Panc1 (cell line): ENCODE measurements at regions of chr1 and their contacts with region 1.

Region 1: DNA sequence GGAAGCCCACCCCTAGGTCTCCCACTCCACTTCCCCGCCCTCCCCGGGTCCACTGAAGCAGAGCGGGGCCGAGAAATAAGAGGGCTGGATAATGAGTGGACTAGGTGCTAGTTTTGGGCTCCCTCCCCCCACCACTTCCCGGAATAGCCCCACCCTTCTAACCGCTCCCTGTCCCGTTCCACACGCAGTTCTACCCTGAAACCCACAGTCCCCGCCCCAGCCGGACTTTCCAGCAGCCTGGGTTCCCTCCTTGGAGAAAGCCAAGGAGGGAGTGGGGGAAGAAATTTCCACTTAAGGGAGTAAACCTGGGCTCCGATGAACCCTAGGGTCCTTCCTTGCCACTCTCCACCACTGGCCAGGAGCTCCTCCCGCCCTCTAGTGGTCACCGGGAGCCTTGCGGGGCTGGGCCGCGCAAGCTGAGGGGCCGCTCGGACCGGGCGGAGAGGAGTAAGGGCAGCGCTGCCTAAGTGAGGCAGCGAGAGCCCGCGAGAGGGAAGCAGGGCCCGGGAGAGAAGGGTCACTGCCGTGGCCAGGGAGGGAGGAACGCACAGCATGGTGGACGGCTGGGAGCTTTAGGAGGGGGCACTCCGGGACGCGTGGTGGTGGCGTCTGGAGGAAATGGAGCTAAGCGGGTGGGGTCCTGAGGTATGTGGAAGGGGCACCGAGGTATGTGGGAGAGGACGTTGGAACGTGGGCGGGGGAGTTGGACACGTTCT is 14.3 kb downstream of the THBS3 start:
- DNase-seq: peak; percentile 69
- ATAC-seq: peak; percentile 87
- H3K4me3 ChIP-seq: peak overlapping the region; percentile 64 to 96
- H3K27ac ChIP-seq: peak overlapping the region; percentile 97
- H3K4me1 ChIP-seq: peaks cover 24% of the 10 kb centered on the region
- H3K27me3 ChIP-seq: no peaks in the 10 kb centered on the region
- CTCF ChIP-seq: peak; percentile 99

Region 2: DNA sequence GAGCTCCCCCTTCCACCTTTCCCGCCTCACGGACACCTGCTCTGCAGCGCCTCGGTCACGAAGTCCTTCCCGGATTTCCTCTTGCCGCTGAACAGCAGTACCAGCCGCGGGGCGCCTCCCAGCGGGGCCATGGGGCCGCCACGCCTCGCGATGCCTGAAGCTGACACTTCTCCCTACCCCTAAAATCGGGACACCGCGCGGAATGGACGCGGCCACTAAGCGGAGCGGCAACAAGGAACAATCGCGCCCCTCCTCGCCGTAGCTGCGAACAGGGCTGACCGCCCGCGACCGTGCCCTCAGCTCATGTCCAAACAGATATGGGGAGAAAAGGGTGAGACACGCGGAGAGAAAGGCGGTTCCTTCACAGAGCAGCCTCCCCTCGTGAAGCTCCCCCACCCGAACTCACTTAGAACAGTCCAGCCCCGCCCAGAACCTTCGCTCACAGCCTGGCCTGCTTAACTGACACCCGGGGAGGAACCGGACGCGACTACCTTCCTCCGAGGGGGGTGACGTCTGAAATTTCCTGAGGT is 256.8 kb before region 1 on chr1 and contains the start of gene PMVK:
- CTCF ChIA-PET with region 1: no interaction called
- POLR2A ChIA-PET with region 1: no interaction called
- in situ Hi-C with region 1: no loop called
- intact Hi-C with region 1: no loop called
- DNase-seq: peak; percentile 85
- ATAC-seq: peak; percentile 95
- H3K4me3 ChIP-seq: peak within 1 kb of the TSS; percentile 68 to 94
- H3K27ac ChIP-seq: peak within 1 kb of the TSS; percentile 97
- H3K4me1 ChIP-seq: peaks cover 11% of the 10 kb centered on the region
- H3K27me3 ChIP-seq: no peaks in the 10 kb centered on the region
- CTCF ChIP-seq: no peak; the same call in 1 of the 2 replicates
- total RNA-seq, gene PMVK: 42.2 TPM

Region 3: GRCh38 chr1:155127105-155127964 is 66.1 kb before region 1 on chr1 and contains the start of gene EFNA1:
- CTCF ChIA-PET with region 1: interaction called, 17 read pairs
- POLR2A ChIA-PET with region 1: interaction called, 5 read pairs
- in situ Hi-C with region 1: no loop called
- intact Hi-C with region 1: no loop called
- DNase-seq: no peak
- ATAC-seq: peak; percentile 71
- H3K4me3 ChIP-seq: peak within 1 kb of the TSS; percentile 64 to 65
- H3K27ac ChIP-seq: peak within 1 kb of the TSS; percentile 92
- H3K4me1 ChIP-seq: peaks cover 59% of the 10 kb centered on the region
- H3K27me3 ChIP-seq: no peaks in the 10 kb centered on the region
- CTCF ChIP-seq: no peak
- total RNA-seq, gene EFNA1: 23.8 TPM

Region 4: DNA sequence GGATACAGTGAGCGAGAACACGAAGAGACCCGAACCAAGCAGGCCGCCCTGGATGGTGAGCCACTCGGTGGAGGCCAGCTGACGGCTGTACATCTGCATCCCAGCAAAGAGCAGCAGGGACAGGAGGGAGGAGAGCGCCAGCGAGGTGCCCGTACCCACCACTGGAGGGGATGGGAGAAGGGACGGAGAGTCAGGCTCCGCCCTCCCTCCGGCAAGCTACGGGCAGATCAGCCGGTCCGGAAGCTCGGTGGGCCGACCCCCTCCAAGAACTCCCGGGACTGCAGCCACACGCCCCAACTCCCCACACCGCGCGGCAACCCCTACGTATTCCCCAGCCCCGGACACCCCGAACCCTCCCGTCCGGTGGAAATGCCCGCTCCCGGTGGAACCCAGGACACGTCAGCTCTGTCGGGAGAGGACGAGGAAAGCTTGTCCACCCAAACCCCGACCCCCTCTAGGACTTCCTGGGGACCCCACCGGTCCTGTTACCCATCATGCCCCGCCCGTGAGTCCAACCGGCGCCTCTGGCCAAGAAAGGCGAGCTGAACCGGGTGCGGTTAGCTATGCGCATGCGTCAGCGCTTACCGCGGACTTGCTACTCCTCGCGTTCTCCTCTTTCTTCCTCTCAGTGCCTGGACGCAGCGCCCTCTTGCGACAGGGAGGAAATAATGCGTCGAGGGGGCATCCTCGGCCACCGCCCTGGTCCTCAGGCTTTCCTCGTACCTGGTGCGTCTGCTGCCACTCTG is 20.5 kb before region 1 on chr1 and contains the start of gene KRTCAP2:
- CTCF ChIA-PET with region 1: interaction called, 14 read pairs
- POLR2A ChIA-PET with region 1: interaction called, 18 read pairs
- in situ Hi-C with region 1: no loop called
- intact Hi-C with region 1: no loop called
- DNase-seq: peak; percentile 89
- ATAC-seq: peak; percentile 81
- H3K4me3 ChIP-seq: peak within 1 kb of the TSS; percentile 88 to 89
- H3K27ac ChIP-seq: peak within 1 kb of the TSS; percentile 92
- H3K4me1 ChIP-seq: peaks cover 24% of the 10 kb centered on the region
- H3K27me3 ChIP-seq: no peaks in the 10 kb centered on the region
- CTCF ChIP-seq: peak; percentile 97
- total RNA-seq, gene KRTCAP2: 155 TPM

Region 5: GRCh38 chr1:155208541-155209311 is 15.3 kb after region 1 on chr1 and contains the start of gene MTX1:
- CTCF ChIA-PET with region 1: interaction called, 4 read pairs
- POLR2A ChIA-PET with region 1: interaction called, 11 read pairs
- in situ Hi-C with region 1: no loop called
- intact Hi-C with region 1: no loop called
- DNase-seq: peak; percentile 51
- ATAC-seq: peak; percentile 87
- H3K4me3 ChIP-seq: peak within 1 kb of the TSS; percentile 94 to 99
- H3K27ac ChIP-seq: peak within 1 kb of the TSS; percentile 93
- H3K4me1 ChIP-seq: peaks cover 19% of the 10 kb centered on the region
- H3K27me3 ChIP-seq: no peaks in the 10 kb centered on the region
- CTCF ChIP-seq: no peak
- total RNA-seq, gene MTX1: 53.6 TPM

Region 6: DNA sequence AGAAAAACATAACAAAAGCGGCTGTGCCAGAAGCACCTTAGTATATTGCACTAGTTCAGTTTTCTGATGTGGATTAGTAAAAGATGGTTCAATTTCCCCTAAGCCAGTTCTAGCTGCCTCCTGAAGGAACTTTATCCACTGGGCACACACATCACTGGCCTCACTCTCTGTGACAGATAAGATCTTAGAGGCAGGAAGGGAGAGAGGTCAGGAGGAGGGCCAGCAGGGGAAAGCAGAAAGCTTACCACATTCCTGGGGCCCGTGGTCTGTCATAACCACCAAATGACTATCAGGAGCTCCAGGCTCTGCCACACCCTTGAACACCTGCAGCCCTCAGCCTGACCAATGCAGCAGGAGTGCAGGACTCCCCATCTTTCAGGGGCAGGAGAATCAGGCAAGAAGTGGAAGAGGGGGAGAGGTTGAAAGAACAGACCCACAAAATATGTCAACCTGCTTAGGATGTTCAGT is 1764.8 kb after region 1 on chr1:
- CTCF ChIA-PET with region 1: no interaction called
- POLR2A ChIA-PET with region 1: no interaction called
- in situ Hi-C with region 1: no loop called
- intact Hi-C with region 1: no loop called
- DNase-seq: no peak
- ATAC-seq: no peak
- H3K4me3 ChIP-seq: no peak overlapping the region
- H3K27ac ChIP-seq: no peak overlapping the region
- H3K4me1 ChIP-seq: no peaks in the 10 kb centered on the region
- H3K27me3 ChIP-seq: no peaks in the 10 kb centered on the region
- CTCF ChIP-seq: no peak